Ascending aorta (tissue), 2 donors: ENCODE measurements at regions of chr3 and their contacts with region 1.

Region 1: DNA sequence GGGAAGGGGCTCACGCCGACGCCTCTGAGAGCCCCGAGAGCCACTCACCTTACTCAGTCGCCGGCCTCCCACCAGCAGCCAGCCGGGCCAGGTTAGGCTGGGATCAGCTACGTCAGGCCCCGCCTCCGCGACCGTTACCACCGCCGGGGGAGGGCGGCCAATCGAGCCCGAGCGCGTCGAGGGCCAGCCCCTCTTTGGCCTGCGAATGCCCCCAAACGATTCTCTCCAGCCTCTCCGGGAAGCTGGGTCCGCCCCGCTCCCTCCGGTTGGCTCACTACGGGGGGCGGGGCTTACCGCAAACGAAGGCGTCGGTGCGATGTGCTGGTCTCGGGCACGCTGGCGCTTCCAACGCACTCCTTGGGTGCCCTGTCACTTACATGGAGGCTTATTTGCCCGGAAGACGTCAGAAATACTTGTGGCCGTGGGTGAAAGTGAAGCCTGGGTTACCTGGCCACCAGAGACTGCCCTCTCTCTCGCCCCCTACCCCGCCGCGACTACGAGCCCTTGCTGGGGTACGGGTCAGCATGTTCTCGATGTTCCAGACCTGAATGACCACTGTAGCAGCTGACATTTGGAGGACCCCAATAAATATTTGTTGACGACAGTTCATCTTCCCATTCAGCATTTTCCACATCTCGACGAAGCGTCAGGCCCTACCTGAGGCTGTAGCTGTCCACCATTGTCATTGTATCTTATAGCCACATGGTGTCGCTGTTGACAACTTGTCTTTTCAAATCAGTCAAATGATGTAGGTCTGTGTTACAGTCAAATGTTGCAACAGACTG is at the start of gene CEP70:
- DNase-seq: peak; percentile 85 to 97
- H3K4me3 ChIP-seq: peak within 1 kb of the TSS; percentile 63 to 91
- H3K27ac ChIP-seq: peak within 1 kb of the TSS; percentile 88 to 94
- H3K4me1 ChIP-seq: peaks cover 0 to 5% of the 10 kb centered on the region in 2 donors
- H3K27me3 ChIP-seq: no peaks in the 10 kb centered on the region
- CTCF ChIP-seq: peak; percentile 87 to 93 (median 91)
- total RNA-seq, gene CEP70: 7.6 TPM

Region 2: GRCh38 chr3:138347960-138348753 is 246.2 kb before region 1 on chr3 and contains the start of gene MRAS:
- intact Hi-C with region 1: loop called (anchors 5 kb)
- DNase-seq: peak; percentile 28 to 91
- H3K4me3 ChIP-seq: peak within 1 kb of the TSS; percentile 96 to 98
- H3K27ac ChIP-seq: peak within 1 kb of the TSS; percentile 92 to 99
- H3K4me1 ChIP-seq: peaks cover 5 to 7% of the 10 kb centered on the region in 2 donors
- H3K27me3 ChIP-seq: no peaks in the 10 kb centered on the region
- CTCF ChIP-seq: peak in 2 of 3 experiments; percentile 28 to 39
- total RNA-seq, gene MRAS: 24.5 TPM

Region 3: DNA sequence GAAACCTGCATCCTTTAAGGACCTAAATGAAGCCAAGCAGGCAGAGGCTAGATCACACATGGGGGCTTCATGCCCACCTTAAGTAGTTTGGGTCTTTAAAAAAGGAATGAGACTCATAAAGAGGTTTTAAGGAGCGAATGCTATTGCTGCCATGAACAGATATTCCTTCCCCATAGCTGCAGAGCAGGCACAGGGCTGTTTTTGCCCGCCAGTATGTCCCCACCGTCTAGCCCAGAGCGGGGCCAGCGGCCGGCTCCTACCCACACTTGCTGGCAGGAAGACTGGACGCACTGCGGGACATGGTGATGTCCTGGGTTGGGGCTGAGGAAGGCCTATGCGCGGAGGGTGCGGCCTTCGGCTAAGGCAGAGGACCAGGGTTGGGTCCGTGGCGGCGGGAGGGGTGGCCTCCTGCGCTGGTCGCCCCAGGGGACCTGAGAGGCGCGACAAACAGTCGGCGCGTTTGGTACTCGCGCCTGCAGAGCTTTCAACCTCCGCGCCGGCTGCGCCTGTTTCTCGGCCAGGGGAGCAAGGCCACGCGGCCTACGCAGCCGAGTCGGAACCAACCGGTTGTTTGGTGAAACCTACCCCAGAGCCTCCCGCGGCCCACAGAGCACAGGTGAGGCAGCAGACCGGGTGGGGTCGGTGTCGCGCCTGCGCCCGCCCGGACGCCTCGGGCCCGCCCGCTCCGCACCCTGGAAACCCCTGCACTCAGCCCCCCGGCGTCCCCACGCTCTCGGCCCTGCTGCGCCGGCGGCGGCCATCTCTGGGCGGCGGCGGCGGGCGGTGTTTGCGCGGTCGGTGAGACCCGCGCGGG is 14.2 kb after region 1 on chr3 and contains the start of gene FAIM:
- intact Hi-C with region 1: loop called (anchors 1 kb)
- DNase-seq: peak in 1 of 2 donors; percentile 76
- H3K4me3 ChIP-seq: peak within 1 kb of the TSS; percentile 81 to 93
- H3K27ac ChIP-seq: peak within 1 kb of the TSS; percentile 97
- H3K4me1 ChIP-seq: peaks cover 3 to 8% of the 10 kb centered on the region in 2 donors
- H3K27me3 ChIP-seq: no peaks in the 10 kb centered on the region
- CTCF ChIP-seq: no peak
- total RNA-seq, gene FAIM: 13.5 TPM

Region 4: GRCh38 chr3:138834359-138835212 is 240.2 kb after region 1 on chr3 and contains the start of gene PIK3CB:
- intact Hi-C with region 1: loop called (anchors 2 kb)
- DNase-seq: peak; percentile 31 to 93
- H3K4me3 ChIP-seq: peak within 1 kb of the TSS; percentile 70 to 98
- H3K27ac ChIP-seq: peak within 1 kb of the TSS; percentile 89 to 90
- H3K4me1 ChIP-seq: peaks cover 0 to 13% of the 10 kb centered on the region in 2 donors
- H3K27me3 ChIP-seq: no peaks in the 10 kb centered on the region
- CTCF ChIP-seq: peak; percentile 26 to 39 (median 28)
- total RNA-seq, gene PIK3CB: 9.3 TPM

Region 5: DNA sequence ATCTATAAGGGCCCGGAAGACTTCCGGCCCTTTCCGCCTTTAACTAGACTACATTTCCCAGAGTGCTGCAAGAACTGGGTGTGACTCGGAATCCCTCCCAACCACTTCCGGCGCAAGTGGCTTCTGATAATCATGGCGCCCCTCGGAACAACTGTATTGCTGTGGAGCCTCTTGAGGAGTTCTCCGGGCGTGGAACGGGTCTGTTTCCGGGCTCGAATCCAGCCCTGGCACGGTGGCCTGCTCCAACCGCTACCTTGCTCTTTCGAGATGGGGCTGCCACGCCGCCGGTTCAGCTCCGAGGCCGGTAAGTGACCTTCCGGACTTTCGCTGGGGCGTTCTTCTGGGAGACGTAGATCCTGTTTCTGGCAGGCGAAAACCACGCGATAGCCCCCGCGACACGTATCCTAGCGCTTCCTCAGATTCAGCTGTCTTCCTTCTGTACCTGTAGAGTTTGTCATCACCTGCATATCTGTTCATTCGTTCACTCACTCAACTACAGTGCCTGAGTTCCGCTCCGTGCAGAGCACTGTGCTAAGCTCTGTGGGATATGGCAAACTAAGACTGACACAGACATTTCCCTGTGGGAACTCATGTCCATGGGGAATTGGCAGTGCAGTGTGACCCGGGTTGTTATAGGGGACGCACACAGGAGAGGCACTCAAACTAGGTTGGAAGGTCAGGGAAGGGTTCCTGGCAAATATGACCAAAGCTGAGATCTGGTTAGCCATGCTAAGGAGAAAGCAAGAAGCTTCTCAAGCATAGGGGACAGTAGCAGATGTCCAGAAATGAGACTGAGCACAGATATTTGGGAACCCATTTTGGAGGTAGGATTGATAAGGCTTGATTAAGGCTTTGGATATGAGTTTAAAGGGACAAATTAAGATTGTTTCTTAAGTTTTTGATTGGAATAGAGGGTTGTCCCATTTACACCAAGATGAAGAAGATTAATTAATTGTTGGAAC is 749.8 kb after region 1 on chr3 and contains the start of gene MRPS22:
- intact Hi-C with region 1: loop called (anchors 5 kb)
- DNase-seq: peak; percentile 43 to 89
- H3K4me3 ChIP-seq: peak within 1 kb of the TSS; percentile 76 to 90
- H3K27ac ChIP-seq: peak within 1 kb of the TSS; percentile 66 to 73
- H3K4me1 ChIP-seq: peaks cover 0 to 12% of the 10 kb centered on the region in 2 donors
- H3K27me3 ChIP-seq: no peaks in the 10 kb centered on the region
- CTCF ChIP-seq: no peak
- total RNA-seq, gene MRPS22: 8.3 TPM

Region 6: GRCh38 chr3:139677388-139678155 is 1083.2 kb after region 1 on chr3 and contains the start of gene NMNAT3:
- intact Hi-C with region 1: loop called (anchors 10 kb)
- DNase-seq: peak; percentile 21 to 88
- H3K4me3 ChIP-seq: peak within 1 kb of the TSS; percentile 84 to 90
- H3K27ac ChIP-seq: peak within 1 kb of the TSS in 1 of 2 donors; percentile 46
- H3K4me1 ChIP-seq: no peaks in the 10 kb centered on the region
- H3K27me3 ChIP-seq: no peaks in the 10 kb centered on the region
- CTCF ChIP-seq: peak in 1 of 3 experiments; percentile 20
- total RNA-seq, gene NMNAT3: 1.2 TPM